Stomach (tissue), 19 donors: ENCODE measurements at regions of chr2 and their contacts with region 1.

Region 1: GRCh38 chr2:240704651-240705050 is 13.0 kb downstream of the AQP12A start:
- DNase-seq: no peak
- H3K4me3 ChIP-seq: no peak overlapping the region
- H3K27ac ChIP-seq: no peak overlapping the region
- H3K4me1 ChIP-seq: no peaks in the 10 kb centered on the region
- H3K27me3 ChIP-seq: peaks cover 0 to 55% (median 0%) of the 10 kb centered on the region in 3 donors
- CTCF ChIP-seq: no peak
- EP300 ChIP-seq: no peak
- POLR2A ChIP-seq: no peak

Region 2: DNA sequence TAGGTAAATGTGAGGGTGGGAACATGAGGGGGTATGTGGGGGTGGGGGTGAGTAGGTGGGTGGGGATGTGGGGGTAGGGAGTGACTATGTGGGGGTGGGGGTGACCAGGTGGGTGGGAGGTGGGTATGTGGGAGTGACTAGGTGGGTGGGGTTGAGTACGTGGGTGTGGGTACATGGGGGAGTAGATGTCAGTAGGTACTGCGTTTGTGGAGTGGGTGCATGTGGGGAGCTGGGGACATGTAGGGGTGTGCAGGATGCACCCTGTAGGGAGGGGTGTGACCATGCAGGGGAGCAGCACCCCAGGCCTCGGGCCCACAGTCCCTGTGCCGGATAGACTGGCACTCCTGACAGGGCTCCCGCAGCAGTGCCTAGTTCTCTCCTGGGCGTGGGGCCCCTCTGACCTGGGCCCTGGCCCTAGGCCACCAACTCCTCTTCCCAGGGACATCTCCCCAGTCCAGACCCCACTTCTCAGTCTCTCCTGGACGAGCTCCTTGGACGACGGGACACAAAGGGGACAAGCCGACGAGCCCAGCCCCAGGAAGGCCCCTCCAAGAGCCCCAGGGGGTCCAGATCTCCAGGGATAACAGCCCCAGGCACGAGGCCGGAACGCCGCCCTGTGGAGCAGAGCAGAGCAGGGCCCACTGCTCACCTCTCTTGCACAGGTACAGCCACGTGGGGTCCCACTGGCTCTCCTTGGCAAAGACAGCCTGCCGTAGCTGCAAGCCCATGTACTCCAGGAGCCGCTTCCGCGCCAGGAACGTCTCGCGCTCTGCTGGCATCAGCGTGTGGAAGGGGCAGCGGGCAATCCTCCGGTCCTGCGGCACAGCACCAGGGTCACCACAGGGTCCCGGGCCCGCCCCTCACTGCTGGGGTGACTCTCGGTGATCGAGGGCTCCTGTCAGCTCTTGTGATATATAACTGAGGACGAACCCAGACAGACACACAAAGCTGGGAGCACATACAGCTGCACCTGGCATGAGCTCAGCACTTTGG is 205.0 kb before region 1 on chr2:
- intact Hi-C with region 1: loop called (anchors 10 kb)
- DNase-seq: peak in 1 of 2 donors; percentile 24
- H3K4me3 ChIP-seq: no peak overlapping the region
- H3K27ac ChIP-seq: no peak overlapping the region
- H3K4me1 ChIP-seq: no peaks in the 10 kb centered on the region
- H3K27me3 ChIP-seq: no peaks in the 10 kb centered on the region
- CTCF ChIP-seq: no peak
- EP300 ChIP-seq: no peak
- POLR2A ChIP-seq: no peak